ENCODE measurements at regions of chr19 and their contacts with region 1.

Region 1: DNA sequence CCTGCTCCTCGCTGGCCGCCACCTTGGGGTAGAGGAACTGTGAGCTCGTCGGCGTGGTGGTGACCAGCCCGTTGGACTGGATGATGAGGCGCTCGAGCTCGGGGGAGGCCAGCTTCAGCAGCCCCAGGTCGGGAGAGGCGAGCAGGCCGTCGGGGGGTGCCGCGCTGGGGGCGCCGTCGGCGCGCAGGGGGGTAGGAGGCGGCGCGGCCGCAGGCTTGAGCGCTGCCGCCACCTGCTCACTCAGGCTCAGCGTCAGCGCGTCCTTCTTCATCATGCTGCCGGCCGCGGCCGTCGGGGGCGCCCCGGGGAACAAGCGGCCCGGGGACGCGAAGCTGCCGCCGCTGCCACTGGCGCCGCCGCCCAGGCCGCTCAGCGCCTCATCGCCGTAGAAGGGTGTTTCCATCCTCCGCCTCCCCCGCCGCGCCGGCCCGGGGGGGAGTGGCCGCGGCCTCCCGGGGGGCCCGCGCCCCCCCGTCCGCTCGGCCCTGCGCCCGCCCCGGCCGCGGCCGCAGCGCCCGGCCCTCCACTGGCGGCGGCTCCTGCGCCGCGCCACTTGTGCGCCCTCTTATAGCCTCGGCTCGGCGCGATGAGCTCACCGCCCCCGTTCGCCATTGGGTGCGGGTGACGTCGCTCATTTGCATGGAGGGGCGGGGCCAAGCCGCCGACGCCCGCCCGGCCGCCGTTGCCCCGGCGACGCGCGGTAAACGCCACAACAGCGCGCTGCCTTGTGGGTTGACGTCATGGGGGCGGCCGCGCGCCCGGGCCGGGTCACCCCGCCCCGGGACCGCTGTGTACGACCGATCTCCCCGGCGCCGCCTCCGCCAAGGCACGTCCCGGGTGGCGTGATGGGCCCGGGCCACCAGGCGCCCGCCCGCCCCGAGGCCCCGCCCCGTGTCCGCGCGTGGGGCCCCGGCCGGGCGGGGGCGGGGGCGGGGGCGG is at the start of gene JUND:
- DNase-seq: peak; percentile 98
- H3K4me3 Mint-ChIP-seq: peak within 1 kb of the TSS; percentile 87
- H3K27ac Mint-ChIP-seq: peak within 1 kb of the TSS; percentile 96
- H3K4me1 Mint-ChIP-seq: peaks cover 49% of the 10 kb centered on the region
- H3K27me3 Mint-ChIP-seq: no peaks in the 10 kb centered on the region
- total RNA-seq, gene JUND: 232 to 236 TPM

Region 2: GRCh38 chr19:18203863-18204393 is 77.4 kb before region 1 on chr19 and contains the start of gene RAB3A:
- CTCF ChIA-PET with region 1: interaction called, 23 read pairs
- POLR2A ChIA-PET with region 1: interaction called, 5 read pairs
- intact Hi-C with region 1: no loop called
- DNase-seq: peak; percentile 100
- H3K4me3 Mint-ChIP-seq: peak within 1 kb of the TSS; percentile 93
- H3K27ac Mint-ChIP-seq: peak within 1 kb of the TSS; percentile 69
- H3K4me1 Mint-ChIP-seq: peaks cover 21% of the 10 kb centered on the region
- H3K27me3 Mint-ChIP-seq: peaks cover 3% of the 10 kb centered on the region
- total RNA-seq, gene RAB3A: 3.9 to 4.3 TPM

Region 3: GRCh38 chr19:18297308-18297707 is 16.0 kb after region 1 on chr19:
- CTCF ChIA-PET with region 1: interaction called, 197 read pairs
- POLR2A ChIA-PET with region 1: interaction called, 416 read pairs
- intact Hi-C with region 1: no loop called
- DNase-seq: no peak
- H3K4me3 Mint-ChIP-seq: no peak overlapping the region
- H3K27ac Mint-ChIP-seq: peak overlapping the region; percentile 90
- H3K4me1 Mint-ChIP-seq: peaks cover 62% of the 10 kb centered on the region
- H3K27me3 Mint-ChIP-seq: no peaks in the 10 kb centered on the region

Region 4: GRCh38 chr19:18322759-18323460 is 41.6 kb after region 1 on chr19 and contains the start of gene LSM4:
- CTCF ChIA-PET with region 1: interaction called, 343 read pairs
- POLR2A ChIA-PET with region 1: interaction called, 257 read pairs
- intact Hi-C with region 1: loop called (anchors 1 kb)
- DNase-seq: peak; percentile 100
- H3K4me3 Mint-ChIP-seq: peak within 1 kb of the TSS; percentile 83
- H3K27ac Mint-ChIP-seq: peak within 1 kb of the TSS; percentile 95
- H3K4me1 Mint-ChIP-seq: peaks cover 48% of the 10 kb centered on the region
- H3K27me3 Mint-ChIP-seq: no peaks in the 10 kb centered on the region
- total RNA-seq, gene LSM4: 356 to 361 TPM

Region 5: DNA sequence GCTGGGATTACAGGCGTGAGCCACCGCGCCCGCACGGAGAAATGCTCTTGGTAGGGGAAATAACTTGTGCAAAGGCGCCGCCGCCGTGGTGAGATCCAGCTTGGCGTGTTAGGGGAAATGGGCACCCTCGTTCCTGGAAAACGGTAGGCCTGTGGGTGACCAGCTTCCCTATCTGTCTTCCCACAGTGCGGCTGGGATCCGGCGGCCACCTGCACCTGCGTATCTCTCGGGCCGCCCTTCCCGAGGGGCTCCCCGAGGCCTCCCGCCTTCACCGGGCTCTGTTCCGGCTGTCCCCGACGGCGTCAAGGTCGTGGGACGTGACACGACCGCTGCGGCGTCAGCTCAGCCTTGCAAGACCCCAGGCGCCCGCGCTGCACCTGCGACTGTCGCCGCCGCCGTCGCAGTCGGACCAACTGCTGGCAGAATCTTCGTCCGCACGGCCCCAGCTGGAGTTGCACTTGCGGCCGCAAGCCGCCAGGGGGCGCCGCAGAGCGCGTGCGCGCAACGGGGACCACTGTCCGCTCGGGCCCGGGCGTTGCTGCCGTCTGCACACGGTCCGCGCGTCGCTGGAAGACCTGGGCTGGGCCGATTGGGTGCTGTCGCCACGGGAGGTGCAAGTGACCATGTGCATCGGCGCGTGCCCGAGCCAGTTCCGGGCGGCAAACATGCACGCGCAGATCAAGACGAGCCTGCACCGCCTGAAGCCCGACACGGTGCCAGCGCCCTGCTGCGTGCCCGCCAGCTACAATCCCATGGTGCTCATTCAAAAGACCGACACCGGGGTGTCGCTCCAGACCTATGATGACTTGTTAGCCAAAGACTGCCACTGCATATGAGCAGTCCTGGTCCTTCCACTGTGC is 107.0 kb after region 1 on chr19:
- CTCF ChIA-PET with region 1: interaction called, 36 read pairs
- POLR2A ChIA-PET with region 1: interaction called, 3 read pairs
- intact Hi-C with region 1: no loop called
- DNase-seq: peak; percentile 88
- H3K4me3 Mint-ChIP-seq: peak overlapping the region; percentile 64
- H3K27ac Mint-ChIP-seq: no peak overlapping the region
- H3K4me1 Mint-ChIP-seq: peaks cover 4% of the 10 kb centered on the region
- H3K27me3 Mint-ChIP-seq: peaks cover 31% of the 10 kb centered on the region